Activated CD4-positive, alpha-beta T cell treated with anti-CD3 and anti-CD28 coated beads, Interleukin-2, amount 10 ng/mL, durations not matched to agents 24 days and 14 days (primary cell): ENCODE measurements at regions of chr1 and their contacts with region 1.

Region 1: DNA sequence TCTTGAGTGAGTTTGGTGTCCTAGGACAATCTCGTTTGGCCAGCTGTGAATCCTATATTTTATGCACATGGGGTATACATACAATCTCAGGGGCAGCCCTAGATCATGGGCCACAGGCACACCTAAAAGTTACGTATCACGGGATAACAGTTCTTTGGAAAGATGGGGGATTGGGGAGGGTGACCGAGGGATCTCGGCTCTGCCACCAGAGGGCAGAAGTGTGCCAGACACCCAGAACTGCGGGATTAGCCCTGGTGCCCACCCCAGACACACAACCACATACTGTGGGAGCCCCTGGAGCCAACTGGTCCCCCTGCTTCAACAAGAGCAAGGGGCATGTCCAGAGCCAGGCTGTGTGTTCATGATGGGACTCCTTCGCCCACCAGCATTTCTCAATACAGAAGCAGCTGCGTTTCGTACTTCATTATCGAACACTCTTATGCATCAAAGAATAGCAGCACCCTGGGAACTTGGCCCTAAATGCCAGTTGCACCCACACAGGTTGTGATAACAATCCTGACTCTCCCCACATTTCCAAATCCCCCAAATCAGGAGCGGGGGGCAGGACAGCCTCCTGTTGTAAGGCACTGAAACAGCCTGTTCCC is 37.4 kb downstream of the TMCO4 start:
- DNase-seq: peak; percentile 72
- H3K4me3 Mint-ChIP-seq: no peak overlapping the region
- H3K27ac Mint-ChIP-seq: no peak overlapping the region
- H3K4me1 Mint-ChIP-seq: peaks cover 23% of the 10 kb centered on the region
- H3K27me3 Mint-ChIP-seq: no peaks in the 10 kb centered on the region

Region 2: GRCh38 chr1:19811206-19811851 is 49.1 kb after region 1 on chr1:
- intact Hi-C with region 1: loop called (anchors 1 kb)
- DNase-seq: peak; percentile 85
- H3K4me3 Mint-ChIP-seq: no peak overlapping the region
- H3K27ac Mint-ChIP-seq: no peak overlapping the region
- H3K4me1 Mint-ChIP-seq: no peaks in the 10 kb centered on the region
- H3K27me3 Mint-ChIP-seq: no peaks in the 10 kb centered on the region